ENCODE measurements at regions of chr9 and their contacts with region 1.

Region 1: DNA sequence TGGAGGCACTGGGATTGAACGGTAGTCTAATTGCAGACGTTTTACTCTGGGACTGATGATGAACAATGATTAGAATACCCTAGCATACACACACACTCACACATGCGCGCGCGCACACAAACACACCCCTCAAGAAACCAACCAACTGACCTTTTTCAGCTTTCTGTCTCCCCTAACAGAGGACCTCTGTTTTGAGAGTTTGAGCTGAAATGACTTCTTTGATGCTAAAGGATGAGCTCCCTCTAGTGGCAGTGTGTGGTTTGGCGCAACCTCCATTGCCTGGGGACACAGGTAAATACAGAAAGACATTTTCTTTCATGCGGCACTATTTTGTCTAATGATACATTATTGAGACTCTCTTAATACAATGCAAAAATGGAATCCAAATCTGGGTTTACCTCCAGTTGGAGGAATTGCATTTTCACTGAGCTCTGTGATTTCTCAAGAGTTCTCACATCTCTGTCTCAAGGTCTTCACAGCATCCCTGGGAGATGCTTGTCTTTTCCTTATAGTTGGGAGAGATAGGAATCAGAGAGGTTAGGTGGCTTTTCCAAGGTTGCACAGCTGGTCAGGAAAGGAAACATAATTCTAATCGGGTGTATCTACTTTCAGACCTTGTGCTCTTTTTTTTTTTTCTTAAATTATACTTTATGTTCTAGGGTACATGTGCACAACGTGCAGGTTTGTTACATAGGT is 187.5 kb downstream of the TMEM38B start:
- DNase-seq: peak; percentile 23
- ATAC-seq: peak; percentile 45
- H3K4me3 Mint-ChIP-seq: no peak overlapping the region
- H3K27ac Mint-ChIP-seq: no peak overlapping the region
- H3K4me1 Mint-ChIP-seq: peaks cover 4% of the 10 kb centered on the region
- H3K27me3 Mint-ChIP-seq: peaks cover 3% of the 10 kb centered on the region
- CTCF ChIP-seq: peak; percentile 85

Region 2: GRCh38 chr9:104177003-104177611 is 1704.7 kb before region 1 on chr9:
- CTCF ChIA-PET with region 1: no interaction called
- POLR2A ChIA-PET with region 1: no interaction called
- intact Hi-C with region 1: no loop called
- DNase-seq: no peak
- ATAC-seq: no peak
- H3K4me3 Mint-ChIP-seq: no peak overlapping the region
- H3K27ac Mint-ChIP-seq: no peak overlapping the region
- H3K4me1 Mint-ChIP-seq: no peaks in the 10 kb centered on the region
- H3K27me3 Mint-ChIP-seq: peaks cover 1% of the 10 kb centered on the region
- CTCF ChIP-seq: no peak

Region 3: GRCh38 chr9:105425841-105426436 is 455.9 kb before region 1 on chr9:
- CTCF ChIA-PET with region 1: no interaction called
- POLR2A ChIA-PET with region 1: no interaction called
- intact Hi-C with region 1: loop called (anchors 1 kb)
- DNase-seq: no peak
- ATAC-seq: no peak
- H3K4me3 Mint-ChIP-seq: no peak overlapping the region
- H3K27ac Mint-ChIP-seq: no peak overlapping the region
- H3K4me1 Mint-ChIP-seq: no peaks in the 10 kb centered on the region
- H3K27me3 Mint-ChIP-seq: no peaks in the 10 kb centered on the region
- CTCF ChIP-seq: no peak

Region 4: DNA sequence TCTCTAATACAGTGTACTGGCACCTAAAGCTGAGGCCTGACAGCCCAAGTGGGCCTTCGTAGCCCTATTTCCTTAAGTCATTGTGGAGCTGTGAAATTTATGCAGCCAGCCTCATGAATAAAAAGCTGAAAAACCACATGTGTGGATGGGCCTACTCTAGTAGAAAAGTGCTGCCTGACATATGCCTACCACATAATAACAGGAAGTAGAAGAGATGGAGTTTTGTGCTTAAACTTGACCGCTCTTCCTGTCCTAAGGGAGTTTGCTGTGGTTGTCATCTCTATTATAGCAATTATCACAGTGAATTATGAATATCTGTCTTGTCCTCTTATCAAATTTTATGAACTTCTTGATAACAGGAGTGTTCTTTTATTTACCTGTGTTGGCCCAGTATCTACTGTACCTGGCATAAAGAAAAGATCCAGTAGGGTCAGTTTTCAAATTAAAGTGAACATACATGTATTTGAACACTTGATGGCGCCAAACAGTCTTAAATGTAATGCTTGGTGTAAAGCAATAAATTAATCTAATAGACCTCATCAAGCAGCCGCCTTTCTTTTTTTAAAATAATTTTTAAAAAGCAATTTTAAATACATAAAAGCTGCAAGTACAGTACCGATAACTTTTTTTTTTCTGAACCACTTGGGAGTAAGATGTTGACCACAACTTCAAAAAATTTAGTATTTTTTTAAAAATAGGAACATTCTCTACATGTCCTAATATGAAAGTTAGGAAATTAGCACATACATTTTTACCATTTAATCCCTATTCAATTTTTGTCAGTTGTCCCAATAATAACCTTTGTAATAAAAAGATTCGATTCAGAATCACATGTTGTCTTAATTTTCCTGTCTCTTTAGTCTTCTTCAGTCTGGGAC is 272.8 kb before region 1 on chr9:
- CTCF ChIA-PET with region 1: interaction called, 18 read pairs
- POLR2A ChIA-PET with region 1: no interaction called
- intact Hi-C with region 1: loop called (anchors 1 kb)
- DNase-seq: no peak
- ATAC-seq: peak; percentile 67
- H3K4me3 Mint-ChIP-seq: no peak overlapping the region
- H3K27ac Mint-ChIP-seq: no peak overlapping the region
- H3K4me1 Mint-ChIP-seq: no peaks in the 10 kb centered on the region
- H3K27me3 Mint-ChIP-seq: no peaks in the 10 kb centered on the region
- CTCF ChIP-seq: peak; percentile 77

Region 5: DNA sequence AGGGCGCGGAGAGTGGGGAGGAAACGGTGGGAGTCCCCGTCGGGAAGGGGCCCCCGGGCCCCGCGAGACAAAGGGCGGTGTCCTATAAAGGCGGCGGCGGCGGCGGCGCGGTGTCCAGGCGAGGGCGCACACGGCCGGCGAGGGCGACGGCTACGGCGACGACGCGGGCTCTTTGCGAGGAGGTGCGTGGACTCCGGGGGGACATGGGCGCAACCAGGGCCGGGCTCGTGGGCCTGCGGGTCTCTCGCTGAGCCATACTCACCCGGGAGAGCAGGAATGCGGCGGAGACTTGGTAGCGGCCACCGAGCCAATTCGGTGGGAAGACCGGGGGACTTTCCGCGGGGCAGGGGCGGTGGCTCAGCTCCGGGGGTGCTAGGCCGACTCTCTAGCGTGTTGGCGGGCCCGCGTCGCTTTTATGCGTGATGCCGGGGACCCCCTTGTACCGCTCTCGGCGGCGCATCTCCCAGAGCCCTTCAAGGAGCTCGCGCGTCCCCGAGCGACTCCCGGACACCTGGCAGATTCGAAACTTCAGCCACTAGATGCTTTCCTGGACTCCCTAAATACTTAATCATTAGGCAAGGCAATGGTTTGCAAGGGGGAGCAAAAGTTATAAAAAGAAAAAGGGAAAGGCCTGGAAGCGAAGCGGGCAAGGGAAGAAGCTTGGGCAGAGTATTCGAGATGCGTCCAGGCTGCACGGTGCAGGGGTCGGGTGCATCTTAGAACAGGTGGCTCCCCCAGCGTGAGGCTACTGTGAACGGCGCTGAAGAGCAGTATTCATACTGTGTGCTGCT is 225.5 kb before region 1 on chr9:
- CTCF ChIA-PET with region 1: no interaction called
- POLR2A ChIA-PET with region 1: no interaction called
- intact Hi-C with region 1: loop called (anchors 5 kb)
- DNase-seq: peak; percentile 31
- ATAC-seq: peak; percentile 72
- H3K4me3 Mint-ChIP-seq: peak overlapping the region; percentile 87
- H3K27ac Mint-ChIP-seq: no peak overlapping the region
- H3K4me1 Mint-ChIP-seq: peaks cover 18% of the 10 kb centered on the region
- H3K27me3 Mint-ChIP-seq: peaks cover 17% of the 10 kb centered on the region
- CTCF ChIP-seq: no peak

Region 6: GRCh38 chr9:105842023-105842644 is 39.7 kb before region 1 on chr9:
- CTCF ChIA-PET with region 1: interaction called, 29 read pairs
- POLR2A ChIA-PET with region 1: no interaction called
- intact Hi-C with region 1: loop called (anchors 1 kb)
- DNase-seq: no peak
- ATAC-seq: no peak
- H3K4me3 Mint-ChIP-seq: no peak overlapping the region
- H3K27ac Mint-ChIP-seq: no peak overlapping the region
- H3K4me1 Mint-ChIP-seq: no peaks in the 10 kb centered on the region
- H3K27me3 Mint-ChIP-seq: no peaks in the 10 kb centered on the region
- CTCF ChIP-seq: no peak